Activated naive CD4-positive, alpha-beta T cell treated with anti-CD3 and anti-CD28 coated beads, Interleukin-2, amount 10 ng/mL, durations not matched to agents 7 days and 5 days (primary cell): ENCODE measurements at regions of chr9 and their contacts with region 1.

Region 1: GRCh38 chr9:18255158-18255629 is 218.8 kb upstream of the ADAMTSL1 start:
- DNase-seq: peak; percentile 78
- H3K4me3 Mint-ChIP-seq: no peak overlapping the region
- H3K27ac Mint-ChIP-seq: no peak overlapping the region
- H3K4me1 Mint-ChIP-seq: no peaks in the 10 kb centered on the region
- H3K27me3 Mint-ChIP-seq: peaks cover 11% of the 10 kb centered on the region

Region 2: GRCh38 chr9:18268381-18268780 is 13.2 kb after region 1 on chr9:
- CTCF ChIA-PET with region 1: interaction called, 17 read pairs
- DNase-seq: no peak
- H3K4me3 Mint-ChIP-seq: no peak overlapping the region
- H3K27ac Mint-ChIP-seq: no peak overlapping the region
- H3K4me1 Mint-ChIP-seq: no peaks in the 10 kb centered on the region
- H3K27me3 Mint-ChIP-seq: no peaks in the 10 kb centered on the region

Region 3: DNA sequence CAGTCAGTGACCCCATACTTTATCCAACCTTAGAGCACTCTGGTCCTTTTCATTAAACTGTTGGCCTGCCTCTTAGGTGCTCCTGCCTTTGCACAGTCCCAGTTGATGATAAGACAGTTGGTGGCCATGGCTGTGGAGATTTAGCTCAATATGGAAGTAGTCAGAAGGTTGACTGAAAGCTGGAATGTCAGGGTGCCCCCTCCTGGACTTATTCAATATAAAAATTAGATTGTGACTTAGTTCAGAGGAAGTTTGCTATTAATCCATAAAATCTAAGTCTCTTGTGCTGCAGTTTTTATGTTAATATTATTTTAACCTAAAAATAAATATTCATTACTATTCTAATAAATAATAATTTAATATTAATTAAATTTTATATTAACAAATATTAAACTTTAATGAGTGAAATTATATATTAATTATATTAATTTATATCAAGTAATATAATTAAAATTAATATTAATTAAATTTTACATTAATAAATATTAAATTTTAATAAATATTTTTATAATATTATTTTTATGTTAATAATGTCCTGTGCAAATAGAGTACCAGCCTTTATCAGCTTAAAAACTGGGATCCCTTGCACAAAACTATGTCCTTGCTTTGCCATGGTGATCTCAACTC is 141.0 kb after region 1 on chr9:
- CTCF ChIA-PET with region 1: no interaction called
- DNase-seq: no peak
- H3K4me3 Mint-ChIP-seq: no peak overlapping the region
- H3K27ac Mint-ChIP-seq: no peak overlapping the region
- H3K4me1 Mint-ChIP-seq: no peaks in the 10 kb centered on the region
- H3K27me3 Mint-ChIP-seq: no peaks in the 10 kb centered on the region

Region 4: GRCh38 chr9:18442629-18443491 is 187.7 kb after region 1 on chr9:
- CTCF ChIA-PET with region 1: interaction called, 26 read pairs
- DNase-seq: peak; percentile 64
- H3K4me3 Mint-ChIP-seq: no peak overlapping the region
- H3K27ac Mint-ChIP-seq: no peak overlapping the region
- H3K4me1 Mint-ChIP-seq: no peaks in the 10 kb centered on the region
- H3K27me3 Mint-ChIP-seq: peaks cover 17% of the 10 kb centered on the region

Region 5: GRCh38 chr9:19028835-19029451 is 773.7 kb after region 1 on chr9:
- CTCF ChIA-PET with region 1: interaction called, 32 read pairs
- DNase-seq: peak; percentile 46
- H3K4me3 Mint-ChIP-seq: no peak overlapping the region
- H3K27ac Mint-ChIP-seq: no peak overlapping the region
- H3K4me1 Mint-ChIP-seq: peaks cover 2% of the 10 kb centered on the region
- H3K27me3 Mint-ChIP-seq: peaks cover 11% of the 10 kb centered on the region